ENCODE measurements at regions of chr3 and their contacts with region 1.

Region 1: DNA sequence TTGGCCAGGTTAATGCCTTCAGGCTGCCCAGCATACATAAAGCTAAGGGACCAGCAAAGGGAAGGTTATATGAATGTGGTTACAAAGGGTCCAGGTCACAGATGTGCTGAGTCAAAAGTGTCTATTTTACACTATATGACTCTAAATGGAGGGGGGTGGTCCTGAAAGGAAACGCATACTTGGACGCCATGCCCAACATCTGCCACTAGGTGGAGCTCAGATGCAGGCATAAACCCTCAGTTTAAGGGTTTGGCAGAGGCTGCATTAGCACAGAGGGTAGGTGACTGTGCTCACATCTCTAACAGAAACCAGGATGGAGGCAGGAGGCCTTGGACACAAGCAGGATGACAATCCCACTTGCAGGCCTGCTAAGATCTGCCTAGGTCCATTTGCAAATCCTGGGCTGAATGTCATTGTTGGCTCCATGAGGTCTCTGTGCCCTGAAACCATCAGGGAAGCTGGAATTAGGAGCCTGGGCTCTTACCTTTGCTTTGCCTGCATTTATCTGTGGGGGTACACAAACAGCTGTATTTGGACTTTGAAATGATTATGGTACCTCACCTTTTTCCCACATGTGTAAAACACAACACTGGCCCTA is 55.8 kb downstream of the ZNF621 start:
- DNase-seq: peak; percentile 43 to 61 (median 46)
- H3K4me3 ChIP-seq: no peak overlapping the region
- H3K4me3 Mint-ChIP-seq: no peak overlapping the region
- H3K27ac ChIP-seq: no peak overlapping the region
- H3K27ac Mint-ChIP-seq: no peak overlapping the region
- H3K4me1 ChIP-seq: no peaks in the 10 kb centered on the region
- H3K4me1 Mint-ChIP-seq: peaks cover 0 to 1% (median 0%) of the 10 kb centered on the region in 4 donors
- H3K27me3 ChIP-seq: no peaks in the 10 kb centered on the region
- H3K27me3 Mint-ChIP-seq: peaks cover 5 to 10% of the 10 kb centered on the region in 2 donors

Region 2: DNA sequence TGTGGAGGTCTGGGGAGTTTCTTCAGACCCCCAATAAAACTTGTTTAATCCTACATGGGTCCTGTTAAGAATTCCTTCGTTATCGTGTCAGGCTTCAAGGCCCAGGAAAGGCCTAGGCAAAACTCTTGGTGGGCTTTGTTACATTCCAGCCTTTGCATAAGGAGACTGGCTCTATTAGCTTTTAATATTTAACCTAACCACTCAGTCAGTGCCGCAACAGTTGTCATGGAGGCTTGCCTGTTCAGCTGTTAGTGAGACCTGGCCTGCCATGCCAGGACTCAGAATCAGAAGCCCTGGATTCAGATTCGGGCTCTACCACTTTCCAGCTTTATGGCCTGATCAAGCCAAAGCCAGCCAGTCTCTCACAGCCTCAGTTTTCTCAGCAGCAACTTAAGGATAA is 251.5 kb before region 1 on chr3:
- CTCF ChIA-PET with region 1: interaction called, 76 read pairs
- POLR2A ChIA-PET with region 1: no interaction called
- intact Hi-C with region 1: loop called (anchors 1 kb)
- DNase-seq: no peak
- H3K4me3 ChIP-seq: no peak overlapping the region
- H3K4me3 Mint-ChIP-seq: no peak overlapping the region
- H3K27ac ChIP-seq: no peak overlapping the region
- H3K27ac Mint-ChIP-seq: no peak overlapping the region
- H3K4me1 ChIP-seq: no peaks in the 10 kb centered on the region
- H3K4me1 Mint-ChIP-seq: peaks cover 3 to 4% (median 4%) of the 10 kb centered on the region in 4 donors
- H3K27me3 ChIP-seq: no peaks in the 10 kb centered on the region
- H3K27me3 Mint-ChIP-seq: peaks cover 3% of the 10 kb centered on the region in 2 donors

Region 3: DNA sequence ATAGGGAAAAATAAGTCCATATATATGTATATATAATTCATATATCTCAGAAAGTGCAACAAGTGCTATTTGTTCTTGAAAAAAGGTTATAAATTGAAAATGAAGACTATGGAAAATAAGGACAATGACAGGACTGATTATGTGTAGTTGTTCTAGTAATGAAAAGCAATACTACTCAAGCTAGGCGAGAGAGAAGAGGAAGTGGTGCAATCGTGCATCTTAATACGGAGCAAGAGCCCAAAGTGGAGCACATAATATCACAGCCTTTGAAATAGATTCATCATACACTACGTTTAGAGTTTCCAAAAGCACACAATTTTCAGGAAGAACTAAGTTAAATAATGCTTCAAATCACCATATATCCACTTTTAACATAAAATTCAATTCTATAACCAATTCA is 1293.4 kb after region 1 on chr3:
- CTCF ChIA-PET with region 1: interaction called, 141 read pairs
- POLR2A ChIA-PET with region 1: no interaction called
- intact Hi-C with region 1: no loop called
- DNase-seq: no peak
- H3K4me3 ChIP-seq: no peak overlapping the region
- H3K4me3 Mint-ChIP-seq: no peak overlapping the region
- H3K27ac ChIP-seq: no peak overlapping the region
- H3K27ac Mint-ChIP-seq: no peak overlapping the region
- H3K4me1 ChIP-seq: no peaks in the 10 kb centered on the region
- H3K4me1 Mint-ChIP-seq: peaks cover 0 to 3% (median under 1%) of the 10 kb centered on the region in 4 donors
- H3K27me3 ChIP-seq: no peaks in the 10 kb centered on the region
- H3K27me3 Mint-ChIP-seq: no peaks in the 10 kb centered on the region

Region 4: GRCh38 chr3:42190701-42191462 is 1610.3 kb after region 1 on chr3:
- CTCF ChIA-PET with region 1: interaction called, 11 read pairs
- POLR2A ChIA-PET with region 1: no interaction called
- intact Hi-C with region 1: no loop called
- DNase-seq: peak; percentile 49 to 61 (median 52)
- H3K4me3 ChIP-seq: no peak overlapping the region
- H3K4me3 Mint-ChIP-seq: no peak overlapping the region
- H3K27ac ChIP-seq: no peak overlapping the region
- H3K27ac Mint-ChIP-seq: peak overlapping the region in 5 of 7 donors; percentile 10 to 61 (median 51)
- H3K4me1 ChIP-seq: no peaks in the 10 kb centered on the region
- H3K4me1 Mint-ChIP-seq: peaks cover 4 to 19% (median 10%) of the 10 kb centered on the region in 4 donors
- H3K27me3 ChIP-seq: no peaks in the 10 kb centered on the region
- H3K27me3 Mint-ChIP-seq: no peaks in the 10 kb centered on the region

Measured in CD4-positive, alpha-beta memory T cell (primary cell).